ENCODE measurements at regions of chr14 and their contacts with region 1.

Region 1: GRCh38 chr14:77457522-77458290 is at the starts of genes AHSA1 and VIPAS39:
- DNase-seq: peak; percentile 96
- H3K4me3 ChIP-seq: peak within 1 kb of the TSS; percentile 94
- H3K27me3 ChIP-seq: no peaks in the 10 kb centered on the region
- CTCF ChIP-seq: no peak
- polyA plus RNA-seq, gene AHSA1: 90.1 and 126 TPM in 2 replicates
- polyA plus RNA-seq, gene VIPAS39: 31.3 and 38.4 TPM in 2 replicates

Region 2: DNA sequence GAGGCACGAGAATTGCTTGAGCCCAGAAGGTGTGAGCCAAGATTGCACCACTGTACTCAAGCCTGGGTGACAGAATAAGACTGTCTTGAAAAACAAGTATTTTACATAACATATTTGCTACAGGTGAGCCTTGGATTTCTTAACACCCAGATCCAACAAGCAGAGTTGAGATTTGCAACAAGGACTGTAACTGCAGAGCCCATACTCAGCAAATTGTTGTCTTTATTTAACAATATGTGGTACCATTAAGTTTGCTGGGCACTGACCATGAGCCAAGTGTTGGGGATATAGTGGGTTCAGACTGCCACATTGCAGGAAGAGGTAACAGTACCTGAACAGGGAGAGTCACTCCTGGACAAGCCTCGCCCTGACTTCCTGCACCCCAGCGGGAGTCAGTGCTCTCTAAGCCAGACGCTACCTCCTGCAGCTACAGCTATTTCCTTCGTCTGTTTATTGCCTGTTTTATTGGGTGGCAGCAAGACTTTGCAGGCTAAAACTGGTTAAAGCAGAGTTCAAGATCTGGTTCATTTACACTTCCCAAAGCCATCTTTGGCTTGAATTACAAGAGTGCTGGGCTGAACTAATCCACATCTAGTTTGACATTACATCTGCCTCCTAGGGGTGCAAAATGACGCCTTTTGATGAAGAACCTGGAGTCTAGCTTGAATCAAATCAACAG is 12.6 kb after region 1 on chr14:
- CTCF ChIA-PET with region 1: interaction called, 38 read pairs
- POLR2A ChIA-PET with region 1: no interaction called
- DNase-seq: no peak
- H3K4me3 ChIP-seq: no peak overlapping the region
- H3K27me3 ChIP-seq: peaks cover 8% of the 10 kb centered on the region; the same call in 1 of the 2 replicates
- CTCF ChIP-seq: no peak

Region 3: GRCh38 chr14:77554207-77554606 is 96.5 kb after region 1 on chr14:
- CTCF ChIA-PET with region 1: interaction called, 41 read pairs
- POLR2A ChIA-PET with region 1: no interaction called
- DNase-seq: no peak
- H3K4me3 ChIP-seq: no peak overlapping the region
- H3K27me3 ChIP-seq: no peaks in the 10 kb centered on the region
- CTCF ChIP-seq: no peak

Region 4: DNA sequence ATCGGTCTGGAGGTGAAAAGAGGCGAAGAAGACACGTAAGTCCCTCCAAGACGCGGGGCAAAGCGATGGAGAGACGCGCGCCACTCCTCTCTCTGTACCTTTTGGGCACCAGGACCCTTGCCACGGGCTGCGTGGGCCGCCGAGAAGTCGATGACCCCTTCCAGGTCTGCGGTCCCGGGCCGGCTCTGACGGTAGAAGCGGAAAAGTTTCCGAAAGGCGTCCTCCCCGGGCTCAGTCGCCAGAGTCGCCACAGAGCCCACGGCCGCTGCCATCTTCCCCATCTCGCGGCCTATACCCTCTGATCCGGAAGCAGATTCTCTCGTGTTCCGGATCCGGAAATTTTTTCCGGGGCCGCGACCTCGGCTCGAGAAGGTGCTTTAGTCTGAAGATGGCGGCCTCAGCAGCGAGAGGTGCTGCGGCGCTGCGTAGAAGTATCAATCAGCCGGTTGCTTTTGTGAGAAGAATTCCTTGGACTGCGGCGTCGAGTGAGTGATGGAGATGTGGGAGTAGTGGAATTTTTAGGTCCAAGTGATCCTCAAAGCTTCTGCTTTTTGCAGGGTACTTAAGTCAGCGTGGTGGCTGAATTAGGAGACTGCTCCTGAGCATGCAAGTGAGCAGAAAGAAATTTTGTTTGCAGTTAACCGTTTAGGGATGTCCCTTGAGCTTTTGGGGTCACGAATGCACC is 250.2 kb after region 1 on chr14 and contains the starts of genes ALKBH1 and SLIRP:
- CTCF ChIA-PET with region 1: interaction called, 21 read pairs
- POLR2A ChIA-PET with region 1: no interaction called
- DNase-seq: peak; percentile 18
- H3K4me3 ChIP-seq: peak within 1 kb of the TSS; percentile 57
- H3K27me3 ChIP-seq: no peaks in the 10 kb centered on the region
- CTCF ChIP-seq: no peak
- polyA plus RNA-seq, gene ALKBH1: 9.2 and 12.2 TPM in 2 replicates
- polyA plus RNA-seq, gene SLIRP: 162 and 231 TPM in 2 replicates